Activated CD4-positive, alpha-beta memory T cell treated with anti-CD3 and anti-CD28 coated beads, Interleukin-2, amount 10 ng/mL, durations not matched to agents 7 days and 5 days (primary cell): ENCODE measurements at regions of chr16 and their contacts with region 1.

Region 1: GRCh38 chr16:68417711-68418301 is 30.5 kb downstream of the SMPD3 start:
- DNase-seq: peak; percentile 85
- H3K4me3 Mint-ChIP-seq: peak overlapping the region; percentile 71
- H3K27ac Mint-ChIP-seq: peak overlapping the region; percentile 94
- H3K4me1 Mint-ChIP-seq: peaks cover 31% of the 10 kb centered on the region
- H3K27me3 Mint-ChIP-seq: peaks cover 3% of the 10 kb centered on the region

Region 2: DNA sequence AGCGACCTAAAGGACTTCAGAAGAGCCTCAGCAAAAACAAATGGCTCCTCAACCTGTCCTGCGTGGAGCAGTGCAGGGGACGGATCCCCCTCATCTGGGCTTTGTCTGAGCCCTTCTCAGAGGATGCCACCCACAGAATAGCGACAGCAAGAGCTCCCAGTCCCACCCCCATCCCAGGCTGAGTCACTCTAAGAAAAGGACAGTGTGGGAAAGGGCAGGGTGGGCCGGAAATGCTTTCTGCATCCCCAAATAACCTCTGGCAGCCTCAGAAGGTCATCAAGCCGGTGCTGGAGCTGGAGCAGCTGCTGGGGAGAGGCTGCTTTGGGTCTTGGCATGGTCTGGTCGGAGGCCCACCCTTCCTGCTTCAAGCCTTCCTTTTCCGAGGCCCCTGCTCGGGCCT is 458.3 kb before region 1 on chr16:
- CTCF ChIA-PET with region 1: no interaction called
- POLR2A ChIA-PET with region 1: no interaction called
- DNase-seq: no peak
- H3K4me3 Mint-ChIP-seq: no peak overlapping the region
- H3K27ac Mint-ChIP-seq: peak overlapping the region; percentile 26
- H3K4me1 Mint-ChIP-seq: peaks cover 1% of the 10 kb centered on the region
- H3K27me3 Mint-ChIP-seq: no peaks in the 10 kb centered on the region

Region 3: DNA sequence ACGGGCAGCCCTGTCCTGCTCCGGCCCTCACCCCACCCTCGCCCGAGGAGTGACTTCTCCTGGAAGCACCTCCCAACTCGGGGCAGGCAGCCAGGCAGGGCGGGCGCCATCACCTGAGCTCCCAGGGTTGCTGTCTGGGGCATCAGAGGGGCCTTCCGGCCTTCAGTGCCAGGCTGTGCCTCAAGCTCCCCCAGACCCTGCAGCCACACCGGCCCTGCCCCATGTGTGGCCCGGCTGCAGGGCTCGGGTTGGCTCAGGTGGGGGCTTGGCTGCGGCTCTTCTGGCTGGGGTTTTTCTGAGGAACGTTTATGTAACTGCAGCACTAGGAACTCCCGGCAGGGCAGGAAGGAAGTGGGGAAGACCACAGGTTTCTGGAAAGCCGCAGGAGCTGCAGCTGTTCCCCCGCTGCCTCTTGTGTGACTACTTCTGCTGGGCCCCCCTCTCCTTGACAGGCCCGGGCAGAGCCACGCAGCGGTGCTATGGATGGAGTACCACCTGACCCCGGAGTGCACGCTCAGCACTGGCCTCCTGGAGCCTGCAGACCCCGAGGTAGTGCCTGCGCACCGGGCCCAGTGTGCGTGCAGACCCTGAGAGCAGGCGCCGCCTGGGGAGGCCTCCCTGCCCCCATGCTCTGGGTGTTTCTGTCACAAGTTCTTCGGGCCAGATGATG is 61.4 kb before region 1 on chr16:
- CTCF ChIA-PET with region 1: no interaction called
- POLR2A ChIA-PET with region 1: interaction called, 17 read pairs
- DNase-seq: peak; percentile 87
- H3K4me3 Mint-ChIP-seq: peak overlapping the region; percentile 43
- H3K27ac Mint-ChIP-seq: peak overlapping the region; percentile 18
- H3K4me1 Mint-ChIP-seq: peaks cover 36% of the 10 kb centered on the region
- H3K27me3 Mint-ChIP-seq: no peaks in the 10 kb centered on the region

Region 4: DNA sequence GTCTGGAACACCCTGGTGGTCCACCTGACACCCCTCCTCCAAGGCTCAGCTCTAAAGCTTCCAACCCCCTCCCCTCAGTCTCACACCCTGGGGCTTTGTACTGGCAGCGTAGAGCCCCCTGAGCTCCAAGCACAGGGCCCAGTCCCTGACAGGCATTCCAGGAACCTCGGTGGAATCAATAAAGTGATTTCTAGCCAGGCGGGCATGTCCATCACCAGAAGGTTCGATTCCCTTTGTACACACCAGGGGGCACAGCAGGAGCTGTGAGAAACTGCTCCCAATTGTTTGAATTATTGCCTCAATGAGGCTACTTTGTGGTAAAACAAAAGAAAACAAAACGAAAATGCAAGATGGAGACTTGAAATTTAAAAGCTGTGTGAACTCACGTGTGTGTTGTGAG is 21.3 kb before region 1 on chr16:
- CTCF ChIA-PET with region 1: interaction called, 15 read pairs
- POLR2A ChIA-PET with region 1: interaction called, 3 read pairs
- DNase-seq: peak; percentile 58
- H3K4me3 Mint-ChIP-seq: no peak overlapping the region
- H3K27ac Mint-ChIP-seq: no peak overlapping the region
- H3K4me1 Mint-ChIP-seq: peaks cover 18% of the 10 kb centered on the region
- H3K27me3 Mint-ChIP-seq: peaks cover 14% of the 10 kb centered on the region

Region 5: DNA sequence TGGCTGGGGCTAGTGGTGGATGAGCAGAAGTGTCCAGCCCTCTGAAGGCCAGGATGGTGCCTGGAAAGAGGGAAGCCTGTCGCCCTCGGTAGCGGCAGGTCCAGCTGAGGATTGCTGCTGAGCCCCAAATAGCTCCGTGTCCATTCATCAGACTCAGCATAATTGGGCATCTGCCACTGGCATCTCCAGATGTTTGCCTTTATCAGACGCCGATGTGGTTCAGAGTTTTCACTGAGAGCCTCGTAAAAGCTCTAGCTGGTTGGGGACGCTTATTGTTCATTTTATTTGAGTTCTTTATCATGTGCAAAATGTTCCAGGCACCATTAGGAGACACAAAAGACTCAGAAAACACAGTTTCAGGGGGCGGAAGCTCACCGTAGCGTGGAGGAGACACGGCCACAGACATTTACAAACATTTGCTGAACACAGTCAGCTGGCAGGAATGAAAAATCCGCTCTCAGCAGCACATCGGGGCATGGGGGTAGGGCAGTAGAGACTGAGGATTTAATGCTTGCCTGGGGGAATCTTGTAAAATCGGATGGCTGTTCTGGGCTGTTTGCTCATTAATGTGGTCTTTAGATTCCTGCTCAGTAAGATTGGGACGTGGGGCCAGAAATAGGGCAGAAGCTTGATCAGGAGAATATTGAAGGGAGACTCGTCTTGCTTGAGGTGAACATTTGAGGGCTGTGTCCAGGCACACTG is 11.2 kb before region 1 on chr16:
- CTCF ChIA-PET with region 1: interaction called, 14 read pairs
- POLR2A ChIA-PET with region 1: interaction called, 5 read pairs
- DNase-seq: no peak
- H3K4me3 Mint-ChIP-seq: no peak overlapping the region
- H3K27ac Mint-ChIP-seq: no peak overlapping the region
- H3K4me1 Mint-ChIP-seq: peaks cover 2% of the 10 kb centered on the region
- H3K27me3 Mint-ChIP-seq: peaks cover 13% of the 10 kb centered on the region

Region 6: DNA sequence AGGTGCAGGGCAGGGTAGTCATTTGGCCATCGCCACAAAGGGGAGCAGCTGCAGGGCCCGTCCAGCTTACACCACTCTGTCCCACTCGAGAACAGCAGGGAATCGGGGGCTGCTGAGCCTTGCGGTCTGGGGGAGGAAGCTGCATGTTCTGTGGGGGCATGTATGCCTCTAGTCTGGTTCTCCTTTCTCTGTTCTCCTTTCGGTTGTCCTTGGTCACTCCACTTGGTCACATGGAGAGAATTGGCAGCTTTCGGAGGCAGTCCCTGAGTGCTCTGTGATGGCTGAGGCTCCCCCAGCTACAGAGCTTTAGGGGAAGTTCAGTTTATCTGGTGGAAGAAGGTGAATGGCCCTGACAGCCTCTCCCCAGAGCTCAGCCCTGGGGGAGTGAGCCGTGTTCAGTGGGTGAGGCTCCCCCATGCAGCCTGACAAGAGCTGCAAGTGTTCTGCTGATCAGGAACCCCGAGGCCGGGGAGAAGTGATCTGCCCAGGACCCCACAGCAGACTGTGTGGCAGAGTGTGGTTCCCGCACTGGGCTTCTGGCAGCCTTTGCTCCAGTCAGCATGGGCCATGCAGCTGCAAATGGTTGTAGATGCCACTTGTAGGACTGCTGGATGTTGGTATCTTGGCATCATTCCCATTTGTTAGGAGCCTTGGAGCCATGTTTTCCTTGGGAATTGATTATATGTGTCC is 52.8 kb after region 1 on chr16:
- CTCF ChIA-PET with region 1: interaction called, 3 read pairs
- POLR2A ChIA-PET with region 1: interaction called, 11 read pairs
- DNase-seq: no peak
- H3K4me3 Mint-ChIP-seq: peak overlapping the region; percentile 51
- H3K27ac Mint-ChIP-seq: peak overlapping the region; percentile 53
- H3K4me1 Mint-ChIP-seq: peaks cover 33% of the 10 kb centered on the region
- H3K27me3 Mint-ChIP-seq: peaks cover 8% of the 10 kb centered on the region

Region 7: GRCh38 chr16:68509381-68509780 is 91.6 kb after region 1 on chr16:
- CTCF ChIA-PET with region 1: interaction called, 11 read pairs
- POLR2A ChIA-PET with region 1: no interaction called
- DNase-seq: no peak
- H3K4me3 Mint-ChIP-seq: no peak overlapping the region
- H3K27ac Mint-ChIP-seq: no peak overlapping the region
- H3K4me1 Mint-ChIP-seq: peaks cover 2% of the 10 kb centered on the region
- H3K27me3 Mint-ChIP-seq: peaks cover 20% of the 10 kb centered on the region

Region 8: GRCh38 chr16:68520649-68521086 is 102.9 kb after region 1 on chr16:
- CTCF ChIA-PET with region 1: interaction called, 16 read pairs
- POLR2A ChIA-PET with region 1: no interaction called
- DNase-seq: peak; percentile 87
- H3K4me3 Mint-ChIP-seq: no peak overlapping the region
- H3K27ac Mint-ChIP-seq: no peak overlapping the region
- H3K4me1 Mint-ChIP-seq: peaks cover 6% of the 10 kb centered on the region
- H3K27me3 Mint-ChIP-seq: peaks cover 5% of the 10 kb centered on the region

Region 9: GRCh38 chr16:68605746-68606145 is 187.9 kb after region 1 on chr16:
- CTCF ChIA-PET with region 1: no interaction called
- POLR2A ChIA-PET with region 1: no interaction called
- DNase-seq: no peak
- H3K4me3 Mint-ChIP-seq: no peak overlapping the region
- H3K27ac Mint-ChIP-seq: no peak overlapping the region
- H3K4me1 Mint-ChIP-seq: no peaks in the 10 kb centered on the region
- H3K27me3 Mint-ChIP-seq: no peaks in the 10 kb centered on the region